ENCODE measurements at regions of chr14 and their contacts with region 1.

Region 1: GRCh38 chr14:51723990-51724389 is 72.3 kb downstream of the FRMD6 start:
- DNase-seq: no peak
- H3K4me3 ChIP-seq: no peak overlapping the region
- H3K27ac ChIP-seq: no peak overlapping the region
- H3K4me1 ChIP-seq: no peaks in the 10 kb centered on the region
- H3K27me3 ChIP-seq: no peaks in the 10 kb centered on the region
- CTCF ChIP-seq: no peak
- POLR2A ChIP-seq: no peak

Region 2: DNA sequence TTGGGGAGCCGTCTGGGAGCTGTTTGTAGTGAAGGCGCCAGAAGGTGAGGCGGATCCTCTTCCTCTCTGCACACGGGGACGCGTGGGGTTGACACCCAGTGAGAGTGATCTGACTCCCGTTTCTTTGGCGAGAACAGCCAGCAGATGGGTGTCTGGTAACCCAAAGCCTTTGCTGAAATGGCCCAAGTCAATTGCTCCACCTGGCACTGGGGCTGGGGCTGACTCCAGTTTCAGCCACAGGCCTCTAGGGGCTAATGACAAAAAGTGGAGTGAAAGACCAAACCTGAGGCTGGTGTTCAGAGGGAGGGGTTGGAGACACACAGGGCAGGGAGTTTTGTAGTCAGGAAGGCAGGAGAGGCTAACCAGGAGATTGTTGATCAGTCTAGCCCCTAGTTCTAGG is 14.8 kb after region 1 on chr14:
- intact Hi-C with region 1: loop called (anchors 1 kb)
- DNase-seq: no peak
- H3K4me3 ChIP-seq: no peak overlapping the region
- H3K27ac ChIP-seq: no peak overlapping the region
- H3K4me1 ChIP-seq: no peaks in the 10 kb centered on the region
- H3K27me3 ChIP-seq: no peaks in the 10 kb centered on the region
- CTCF ChIP-seq: no peak
- POLR2A ChIP-seq: no peak

Region 3: GRCh38 chr14:51967521-51967920 is 243.5 kb after region 1 on chr14:
- intact Hi-C with region 1: no loop called
- DNase-seq: no peak
- H3K4me3 ChIP-seq: no peak overlapping the region
- H3K27ac ChIP-seq: no peak overlapping the region
- H3K4me1 ChIP-seq: no peaks in the 10 kb centered on the region
- H3K27me3 ChIP-seq: no peaks in the 10 kb centered on the region
- CTCF ChIP-seq: no peak
- POLR2A ChIP-seq: no peak

Measured in breast epithelium (tissue), 4 donors.